ENCODE measurements at regions of chr1 and their contacts with region 1.

Region 1: GRCh38 chr1:153990468-153991150 is at the start of gene RPS27:
- DNase-seq: peak; percentile 86
- H3K4me3 ChIP-seq: peak within 1 kb of the TSS; percentile 71
- H3K27me3 ChIP-seq: no peaks in the 10 kb centered on the region
- CTCF ChIP-seq: no peak
- polyA plus RNA-seq, gene RPS27: 8,584 and 9,070 TPM in 2 replicates

Region 2: GRCh38 chr1:153698020-153698931 is 292.3 kb before region 1 on chr1:
- CTCF ChIA-PET with region 1: no interaction called
- POLR2A ChIA-PET with region 1: no interaction called
- DNase-seq: no peak
- H3K4me3 ChIP-seq: no peak overlapping the region
- H3K27me3 ChIP-seq: no peaks in the 10 kb centered on the region
- CTCF ChIP-seq: no peak

Region 3: DNA sequence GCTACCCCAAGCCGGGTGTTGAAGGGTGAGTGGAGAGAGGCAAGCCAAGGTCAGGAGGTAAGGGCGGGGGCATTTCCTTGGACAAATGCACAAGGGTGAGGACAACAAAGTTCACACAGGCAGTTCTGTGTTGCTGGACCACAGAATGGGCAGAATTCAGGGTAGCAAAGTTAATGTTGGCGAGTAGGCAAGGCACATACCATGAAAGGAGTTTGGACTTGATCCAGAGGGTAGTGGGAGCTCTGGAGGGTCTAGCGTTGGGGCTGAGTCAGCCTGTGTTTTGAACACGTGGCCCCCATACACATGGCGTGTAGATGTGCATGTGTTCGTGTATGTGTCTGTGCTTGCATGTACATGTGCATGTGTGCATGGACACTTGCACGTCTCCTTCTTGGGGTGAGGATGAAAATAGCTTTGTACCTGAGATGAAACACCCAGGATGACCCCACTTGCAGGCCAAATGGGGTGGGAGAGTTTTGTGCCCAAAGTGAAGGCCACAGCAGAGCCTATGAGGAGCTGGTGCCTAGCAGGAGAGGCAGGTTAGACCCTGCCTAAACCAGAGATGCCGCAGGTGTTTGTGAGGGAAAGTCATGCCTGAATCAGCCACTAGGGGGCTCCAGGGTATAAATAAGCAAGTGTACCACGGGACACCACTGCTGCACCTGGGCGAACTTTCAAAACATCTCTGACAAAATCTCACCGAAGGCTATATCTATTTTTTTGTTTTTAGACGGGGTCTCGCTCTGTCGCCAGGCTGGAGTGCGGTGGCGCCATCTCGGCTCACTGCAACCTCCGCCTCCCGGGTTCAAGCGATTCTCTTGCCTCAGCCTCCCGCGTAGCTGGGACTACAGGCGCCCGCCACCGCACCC is 193.6 kb before region 1 on chr1:
- CTCF ChIA-PET with region 1: interaction called, 23 read pairs
- POLR2A ChIA-PET with region 1: no interaction called
- DNase-seq: no peak
- H3K4me3 ChIP-seq: no peak overlapping the region
- H3K27me3 ChIP-seq: no peaks in the 10 kb centered on the region
- CTCF ChIP-seq: peak; percentile 84

Region 4: DNA sequence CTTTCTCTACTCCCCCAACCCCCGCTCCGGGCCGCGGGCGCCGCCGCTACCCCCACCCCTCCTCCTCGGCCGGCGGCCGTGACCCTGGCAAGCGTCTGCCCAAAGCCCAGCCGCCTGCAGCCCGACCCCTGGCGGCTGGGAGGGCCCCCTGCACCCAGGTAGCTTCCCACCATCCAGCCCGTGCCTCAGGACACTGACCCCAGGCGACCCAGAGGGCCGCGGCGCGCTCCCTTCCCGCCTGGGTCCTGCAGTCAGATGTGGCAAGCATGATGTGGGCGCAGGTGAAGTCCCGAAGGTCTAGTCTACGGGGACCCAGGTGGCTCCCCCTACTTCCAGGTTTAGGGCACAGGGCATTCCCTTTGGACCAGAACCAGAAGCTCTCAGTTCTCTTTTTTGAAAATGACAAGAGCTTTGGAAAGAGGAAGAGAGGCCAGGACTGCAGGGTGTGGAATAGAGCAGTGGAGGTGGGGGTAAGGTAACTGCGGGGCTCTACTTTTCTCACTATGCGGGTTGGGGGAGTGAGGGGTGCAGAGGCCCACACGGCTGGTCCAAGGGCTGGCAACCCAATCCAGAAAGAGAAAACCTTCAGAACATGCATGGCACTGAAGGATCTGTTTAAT is 43.9 kb before region 1 on chr1 and contains the start of gene DENND4B:
- CTCF ChIA-PET with region 1: interaction called, 17 read pairs
- POLR2A ChIA-PET with region 1: interaction called, 3 read pairs
- DNase-seq: no peak
- H3K4me3 ChIP-seq: peak within 1 kb of the TSS; percentile 56
- H3K27me3 ChIP-seq: no peaks in the 10 kb centered on the region
- CTCF ChIP-seq: peak; percentile 89
- polyA plus RNA-seq, gene DENND4B: 10.1 and 17.6 TPM in 2 replicates

Region 5: DNA sequence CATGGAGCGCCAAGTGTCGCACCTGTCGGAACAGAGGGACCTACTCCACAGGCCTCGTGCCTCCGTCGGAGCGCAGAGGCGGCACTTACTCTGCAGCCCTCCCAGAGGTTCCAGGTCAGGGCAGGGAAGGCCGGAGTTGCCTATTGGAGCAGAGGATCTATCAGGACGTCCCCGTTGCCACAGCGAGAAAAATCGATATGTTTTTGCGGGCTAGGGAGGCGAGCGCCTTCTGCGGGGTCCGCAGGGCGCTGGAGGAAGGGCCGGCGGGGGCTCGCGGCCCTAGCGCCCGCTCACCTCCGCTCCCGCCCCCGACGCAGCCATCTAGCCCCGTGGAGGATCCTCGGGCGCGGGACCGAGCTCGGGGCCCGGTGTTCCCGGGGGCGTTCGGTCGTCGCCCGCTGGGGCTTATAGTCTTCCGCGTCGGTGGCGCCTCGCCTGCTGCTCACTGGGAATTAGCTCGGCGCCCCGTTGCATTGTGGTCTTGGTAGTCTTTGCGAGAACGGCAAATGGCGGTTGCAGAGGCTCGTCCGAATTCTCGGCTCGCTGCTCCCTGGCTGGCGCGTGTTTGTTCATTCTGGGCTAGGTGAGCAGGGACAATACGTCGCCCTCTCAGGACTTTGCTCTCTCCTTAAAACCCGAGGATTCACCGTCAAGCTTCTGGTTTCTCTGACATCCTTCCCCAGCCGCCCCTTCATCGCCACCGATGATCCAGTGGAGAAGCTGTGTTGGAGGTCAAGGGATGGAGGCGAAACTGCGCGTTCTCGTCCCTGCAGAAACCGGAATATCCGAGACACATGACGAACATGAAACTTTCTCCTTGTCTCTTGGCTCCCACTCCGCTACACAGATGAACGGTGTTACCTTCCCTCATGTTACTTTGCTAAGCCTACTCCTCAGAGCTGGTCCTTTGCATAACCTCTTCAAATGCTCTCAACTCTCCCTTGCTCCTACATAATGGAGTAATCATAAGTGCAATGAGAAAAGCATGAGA is 13.1 kb before region 1 on chr1 and contains the start of gene JTB:
- CTCF ChIA-PET with region 1: interaction called, 18 read pairs
- POLR2A ChIA-PET with region 1: interaction called, 11 read pairs
- DNase-seq: no peak
- H3K4me3 ChIP-seq: peak within 1 kb of the TSS; percentile 89
- H3K27me3 ChIP-seq: no peaks in the 10 kb centered on the region
- CTCF ChIP-seq: no peak
- polyA plus RNA-seq, gene JTB: 189 and 227 TPM in 2 replicates

Measured in BJ (cell line).